HepG2 (cell line): ENCODE measurements at regions of chr3 and their contacts with region 1.

Region 1: GRCh38 chr3:83523470-83524073 is 1435.2 kb upstream of the CADM2 start:
- DNase-seq: peak; percentile 64
- ATAC-seq: peak; percentile 100
- H3K4me3 ChIP-seq: no peak overlapping the region; a peak in 1 of 6 replicates
- H3K27ac ChIP-seq: no peak overlapping the region
- H3K4me1 ChIP-seq: no peaks in the 10 kb centered on the region
- H3K27me3 ChIP-seq: no peaks in the 10 kb centered on the region
- CTCF ChIP-seq: peak; percentile 88
- EP300 ChIP-seq: no peak
- POLR2A ChIP-seq: no peak
- RAD21 ChIP-seq: peak; percentile 72

Region 2: DNA sequence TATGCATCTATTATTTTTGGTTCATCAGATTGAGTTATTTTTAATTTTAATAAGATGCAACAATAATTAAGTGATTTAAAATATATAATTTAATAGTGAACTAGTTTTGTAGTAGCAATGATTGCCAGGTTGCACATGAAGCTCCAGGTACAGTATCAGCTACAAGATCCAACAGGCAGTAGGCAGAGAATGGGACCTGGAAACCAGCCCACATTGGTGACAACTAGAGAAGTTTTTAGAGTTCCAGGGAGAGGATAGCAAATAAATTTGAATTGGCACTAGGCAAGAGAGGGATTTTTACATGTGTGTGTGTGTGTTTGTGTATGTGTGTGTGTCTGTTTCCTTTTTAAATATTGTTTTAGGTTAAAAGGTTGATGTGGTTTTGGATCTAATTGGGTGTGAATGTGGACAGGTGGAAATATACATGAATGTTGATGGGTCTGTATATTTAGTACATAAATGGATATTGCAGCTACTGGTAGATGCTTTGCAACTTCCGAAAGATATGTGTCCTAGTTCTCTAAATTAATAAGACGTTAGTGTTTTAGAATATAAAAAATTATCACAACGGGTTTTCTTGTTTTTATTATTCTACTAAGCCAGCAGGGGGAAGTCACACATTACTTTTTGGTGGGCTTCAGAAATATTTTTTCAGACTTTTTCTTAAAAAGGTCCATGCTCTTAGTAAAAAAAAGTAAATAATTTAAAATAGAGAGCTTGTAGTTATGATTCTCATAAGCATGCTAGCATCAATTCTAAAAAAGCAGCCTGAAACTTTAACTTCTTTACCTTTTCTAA is 1652.0 kb before region 1 on chr3:
- CTCF ChIA-PET with region 1: no interaction called
- POLR2A ChIA-PET with region 1: no interaction called
- in situ Hi-C with region 1: no loop called
- intact Hi-C with region 1: loop called (anchors 5 kb)
- DNase-seq: no peak
- ATAC-seq: no peak
- H3K4me3 ChIP-seq: no peak overlapping the region
- H3K27ac ChIP-seq: no peak overlapping the region
- H3K4me1 ChIP-seq: no peaks in the 10 kb centered on the region
- H3K27me3 ChIP-seq: no peaks in the 10 kb centered on the region; a peak in 1 of 5 replicates
- CTCF ChIP-seq: no peak
- EP300 ChIP-seq: no peak
- POLR2A ChIP-seq: no peak
- RAD21 ChIP-seq: no peak

Region 3: GRCh38 chr3:81910244-81910852 is 1613.2 kb before region 1 on chr3:
- CTCF ChIA-PET with region 1: no interaction called
- POLR2A ChIA-PET with region 1: no interaction called
- in situ Hi-C with region 1: no loop called
- intact Hi-C with region 1: loop called (anchors 1 kb)
- DNase-seq: peak; percentile 46
- ATAC-seq: peak; percentile 73
- H3K4me3 ChIP-seq: no peak overlapping the region
- H3K27ac ChIP-seq: no peak overlapping the region
- H3K4me1 ChIP-seq: no peaks in the 10 kb centered on the region
- H3K27me3 ChIP-seq: no peaks in the 10 kb centered on the region
- CTCF ChIP-seq: peak; percentile 73
- EP300 ChIP-seq: no peak
- POLR2A ChIP-seq: no peak
- RAD21 ChIP-seq: no peak

Region 4: GRCh38 chr3:82496890-82497560 is 1026.5 kb before region 1 on chr3:
- CTCF ChIA-PET with region 1: no interaction called
- POLR2A ChIA-PET with region 1: no interaction called
- in situ Hi-C with region 1: no loop called
- intact Hi-C with region 1: loop called (anchors 5 kb)
- DNase-seq: peak; percentile 38
- ATAC-seq: peak; percentile 75
- H3K4me3 ChIP-seq: no peak overlapping the region
- H3K27ac ChIP-seq: no peak overlapping the region
- H3K4me1 ChIP-seq: no peaks in the 10 kb centered on the region
- H3K27me3 ChIP-seq: no peaks in the 10 kb centered on the region
- CTCF ChIP-seq: peak; percentile 47
- EP300 ChIP-seq: no peak
- POLR2A ChIP-seq: no peak
- RAD21 ChIP-seq: no peak

Region 5: GRCh38 chr3:82643948-82644347 is 879.6 kb before region 1 on chr3:
- CTCF ChIA-PET with region 1: no interaction called
- POLR2A ChIA-PET with region 1: no interaction called
- in situ Hi-C with region 1: no loop called
- intact Hi-C with region 1: loop called (anchors 1 kb)
- DNase-seq: peak; percentile 10
- ATAC-seq: peak; percentile 95
- H3K4me3 ChIP-seq: no peak overlapping the region
- H3K27ac ChIP-seq: no peak overlapping the region
- H3K4me1 ChIP-seq: no peaks in the 10 kb centered on the region
- H3K27me3 ChIP-seq: no peaks in the 10 kb centered on the region; a peak in 1 of 5 replicates
- CTCF ChIP-seq: peak; percentile 63
- EP300 ChIP-seq: no peak
- POLR2A ChIP-seq: no peak
- RAD21 ChIP-seq: 0 out of 2 replicates have a peak, but pooled peaks have one; percentile 19